OCI-LY7 (cell line): ENCODE measurements at regions of chr7 and their contacts with region 1.

Region 1: DNA sequence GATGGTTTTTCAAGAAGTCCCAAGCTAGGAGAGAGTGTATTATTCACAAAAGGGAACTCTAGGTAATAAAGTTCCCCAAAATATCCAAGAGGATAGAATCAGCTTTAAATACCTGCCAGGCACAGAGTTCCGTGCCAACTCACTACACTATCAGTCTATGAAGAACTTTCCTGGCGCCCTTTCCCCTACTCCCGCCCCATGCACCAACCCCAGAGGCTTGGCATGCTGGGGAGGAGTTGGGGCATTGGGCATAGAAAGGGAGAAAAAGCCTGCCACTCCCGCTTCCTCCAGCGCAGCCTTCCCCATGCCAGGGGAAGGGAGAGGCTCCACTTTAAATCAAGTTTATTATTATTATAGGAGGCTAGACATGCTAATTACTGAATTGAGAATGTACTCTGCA is 54.9 kb downstream of the ZNF800 start:
- DNase-seq: no peak
- H3K4me3 ChIP-seq: no peak overlapping the region
- H3K27ac ChIP-seq: no peak overlapping the region
- H3K4me1 ChIP-seq: no peaks in the 10 kb centered on the region
- CTCF ChIP-seq: no peak

Region 2: GRCh38 chr7:127264219-127264618 is 73.4 kb before region 1 on chr7:
- CTCF ChIA-PET with region 1: no interaction called
- POLR2A ChIA-PET with region 1: no interaction called
- intact Hi-C with region 1: no loop called
- DNase-seq: no peak
- H3K4me3 ChIP-seq: no peak overlapping the region
- H3K27ac ChIP-seq: no peak overlapping the region
- H3K4me1 ChIP-seq: no peaks in the 10 kb centered on the region
- CTCF ChIP-seq: no peak

Region 3: GRCh38 chr7:127375631-127376030 is 38.0 kb after region 1 on chr7:
- CTCF ChIA-PET with region 1: no interaction called
- POLR2A ChIA-PET with region 1: no interaction called
- intact Hi-C with region 1: no loop called
- DNase-seq: no peak
- H3K4me3 ChIP-seq: no peak overlapping the region
- H3K27ac ChIP-seq: no peak overlapping the region
- H3K4me1 ChIP-seq: peaks cover 6% of the 10 kb centered on the region
- CTCF ChIP-seq: no peak

Region 4: DNA sequence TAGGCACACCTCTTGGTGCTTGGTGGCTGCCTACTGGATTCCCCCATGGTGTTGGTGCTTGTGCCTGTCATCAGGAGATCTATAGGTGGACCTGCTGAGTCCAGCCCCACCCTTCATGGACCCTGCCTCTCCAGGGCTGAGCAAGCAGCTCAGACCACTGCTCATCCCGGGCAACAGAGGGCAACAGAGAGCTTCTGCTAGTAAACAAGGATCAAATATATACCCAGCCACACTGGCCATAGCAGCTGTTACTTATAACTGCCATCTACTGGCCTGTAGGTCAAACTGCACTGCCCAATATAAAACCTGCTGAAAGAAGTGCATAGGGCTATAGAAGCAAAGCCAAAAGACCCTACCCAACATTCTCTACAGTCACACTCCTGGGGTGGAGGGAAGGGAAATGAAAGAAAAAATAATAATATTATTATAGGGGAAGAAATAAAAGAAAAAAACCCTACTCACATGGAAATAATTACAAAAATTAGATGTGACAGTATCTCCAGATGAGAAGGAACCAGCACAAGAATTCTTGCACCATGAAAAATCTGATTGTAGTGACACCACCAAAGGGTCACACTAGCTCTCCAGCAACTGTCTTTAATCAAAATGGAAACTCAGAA is 109.9 kb after region 1 on chr7:
- CTCF ChIA-PET with region 1: no interaction called
- POLR2A ChIA-PET with region 1: no interaction called
- intact Hi-C with region 1: loop called (anchors 10 kb)
- DNase-seq: peak; percentile 82
- H3K4me3 ChIP-seq: no peak overlapping the region
- H3K27ac ChIP-seq: no peak overlapping the region
- H3K4me1 ChIP-seq: no peaks in the 10 kb centered on the region
- CTCF ChIP-seq: peak; percentile 93